A673 (cell line): ENCODE measurements at regions of chr7 and their contacts with region 1.

Region 1: GRCh38 chr7:36037121-36037662 is 115.9 kb upstream of the EEPD1 start:
- DNase-seq: peak; percentile 32
- H3K4me3 ChIP-seq: no peak overlapping the region
- H3K27ac ChIP-seq: no peak overlapping the region
- H3K4me1 ChIP-seq: no peaks in the 10 kb centered on the region
- H3K27me3 ChIP-seq: no peaks in the 10 kb centered on the region
- CTCF ChIP-seq: no peak

Region 2: GRCh38 chr7:34117573-34117972 is 1919.6 kb before region 1 on chr7:
- CTCF ChIA-PET with region 1: no interaction called
- POLR2A ChIA-PET with region 1: no interaction called
- intact Hi-C with region 1: no loop called
- DNase-seq: no peak
- H3K4me3 ChIP-seq: no peak overlapping the region
- H3K27ac ChIP-seq: no peak overlapping the region
- H3K4me1 ChIP-seq: no peaks in the 10 kb centered on the region
- H3K27me3 ChIP-seq: no peaks in the 10 kb centered on the region
- CTCF ChIP-seq: no peak

Region 3: GRCh38 chr7:35831208-35831607 is 206.0 kb before region 1 on chr7:
- CTCF ChIA-PET with region 1: no interaction called
- POLR2A ChIA-PET with region 1: no interaction called
- intact Hi-C with region 1: no loop called
- DNase-seq: peak; percentile 18
- H3K4me3 ChIP-seq: peak overlapping the region; percentile 5
- H3K27ac ChIP-seq: peak overlapping the region; percentile 62
- H3K4me1 ChIP-seq: peaks cover 75% of the 10 kb centered on the region
- H3K27me3 ChIP-seq: no peaks in the 10 kb centered on the region
- CTCF ChIP-seq: no peak

Region 4: GRCh38 chr7:36071605-36072004 is 34.4 kb after region 1 on chr7:
- CTCF ChIA-PET with region 1: interaction called, 3 read pairs
- POLR2A ChIA-PET with region 1: interaction called, 13 read pairs
- intact Hi-C with region 1: no loop called
- DNase-seq: no peak
- H3K4me3 ChIP-seq: no peak overlapping the region
- H3K27ac ChIP-seq: no peak overlapping the region
- H3K4me1 ChIP-seq: no peaks in the 10 kb centered on the region
- H3K27me3 ChIP-seq: no peaks in the 10 kb centered on the region
- CTCF ChIP-seq: no peak

Region 5: DNA sequence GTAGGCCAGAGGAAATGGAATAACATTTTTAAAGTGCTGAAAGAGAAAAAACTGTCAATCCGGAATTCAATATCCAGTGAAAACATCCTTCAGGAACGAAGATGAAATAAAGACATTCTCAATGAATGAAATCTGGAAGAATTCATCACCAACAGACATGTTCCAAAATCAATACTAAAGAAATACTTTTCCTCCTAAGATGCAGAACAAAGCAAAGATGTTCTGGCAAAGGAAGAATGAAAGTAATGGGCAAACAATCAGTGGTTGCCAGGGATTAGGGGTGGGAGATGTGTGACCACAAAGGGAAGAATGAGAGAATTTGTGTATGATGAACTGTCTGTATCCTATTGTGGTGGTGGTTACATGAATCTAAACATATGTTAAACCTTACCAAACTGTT is 63.0 kb after region 1 on chr7:
- CTCF ChIA-PET with region 1: no interaction called
- POLR2A ChIA-PET with region 1: no interaction called
- intact Hi-C with region 1: no loop called
- DNase-seq: no peak
- H3K4me3 ChIP-seq: no peak overlapping the region
- H3K27ac ChIP-seq: no peak overlapping the region
- H3K4me1 ChIP-seq: no peaks in the 10 kb centered on the region
- H3K27me3 ChIP-seq: peaks cover 4% of the 10 kb centered on the region
- CTCF ChIP-seq: no peak

Region 6: DNA sequence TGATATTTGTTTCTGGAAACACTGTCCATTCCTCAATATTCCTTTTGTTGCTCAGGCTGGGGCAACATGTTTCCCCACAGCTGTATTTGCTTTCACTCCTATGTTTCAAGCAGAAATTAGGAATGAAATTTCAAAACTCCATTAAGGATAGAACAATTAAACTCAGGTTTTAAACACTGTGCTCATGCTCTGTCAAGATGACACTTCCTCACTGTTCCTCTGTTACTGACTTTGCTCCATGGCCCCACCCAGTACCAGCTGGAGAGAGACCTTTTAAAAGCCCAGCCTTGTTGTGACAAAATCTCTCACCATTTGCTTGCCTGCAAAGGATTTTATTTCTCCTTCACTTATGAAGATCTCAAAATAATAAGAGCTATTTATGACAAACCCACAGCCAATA is 1214.0 kb after region 1 on chr7:
- CTCF ChIA-PET with region 1: no interaction called
- POLR2A ChIA-PET with region 1: no interaction called
- intact Hi-C with region 1: no loop called
- DNase-seq: no peak
- H3K4me3 ChIP-seq: no peak overlapping the region
- H3K27ac ChIP-seq: no peak overlapping the region
- H3K4me1 ChIP-seq: no peaks in the 10 kb centered on the region
- H3K27me3 ChIP-seq: no peaks in the 10 kb centered on the region
- CTCF ChIP-seq: no peak